Calu3 (cell line): ENCODE measurements at regions of chr19 and their contacts with region 1.

Region 1: DNA sequence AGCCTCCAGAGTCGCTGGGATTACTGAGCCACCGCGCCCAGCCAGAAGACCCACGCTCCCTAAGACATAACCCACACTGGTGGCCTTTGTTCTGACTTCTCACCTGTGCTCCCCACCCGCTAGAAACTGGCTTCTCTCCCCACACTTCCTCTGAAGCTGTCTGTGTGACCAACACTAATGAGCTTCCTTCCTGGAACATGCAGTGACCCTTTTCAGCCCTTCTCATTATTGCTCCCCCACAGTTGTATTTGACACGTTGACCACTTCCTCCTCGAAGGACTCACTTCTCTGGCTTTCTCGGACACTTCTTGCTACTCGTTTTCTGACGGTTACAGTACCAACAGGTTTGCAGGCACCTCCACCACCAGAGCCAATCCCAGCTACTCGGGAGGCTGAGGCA is 10.9 kb downstream of the NCR1 start:
- DNase-seq: no peak
- H3K4me3 Mint-ChIP-seq: no peak overlapping the region
- H3K27ac Mint-ChIP-seq: no peak overlapping the region
- H3K4me1 Mint-ChIP-seq: no peaks in the 10 kb centered on the region
- H3K27me3 Mint-ChIP-seq: peaks cover 71% of the 10 kb centered on the region
- CTCF ChIP-seq: no peak

Region 2: GRCh38 chr19:54653181-54653809 is 263.5 kb before region 1 on chr19:
- CTCF ChIA-PET with region 1: no interaction called
- intact Hi-C with region 1: loop called (anchors 1 kb)
- DNase-seq: no peak
- H3K4me3 Mint-ChIP-seq: no peak overlapping the region
- H3K27ac Mint-ChIP-seq: no peak overlapping the region
- H3K4me1 Mint-ChIP-seq: no peaks in the 10 kb centered on the region
- H3K27me3 Mint-ChIP-seq: peaks cover 64% of the 10 kb centered on the region
- CTCF ChIP-seq: peak; percentile 54

Region 3: DNA sequence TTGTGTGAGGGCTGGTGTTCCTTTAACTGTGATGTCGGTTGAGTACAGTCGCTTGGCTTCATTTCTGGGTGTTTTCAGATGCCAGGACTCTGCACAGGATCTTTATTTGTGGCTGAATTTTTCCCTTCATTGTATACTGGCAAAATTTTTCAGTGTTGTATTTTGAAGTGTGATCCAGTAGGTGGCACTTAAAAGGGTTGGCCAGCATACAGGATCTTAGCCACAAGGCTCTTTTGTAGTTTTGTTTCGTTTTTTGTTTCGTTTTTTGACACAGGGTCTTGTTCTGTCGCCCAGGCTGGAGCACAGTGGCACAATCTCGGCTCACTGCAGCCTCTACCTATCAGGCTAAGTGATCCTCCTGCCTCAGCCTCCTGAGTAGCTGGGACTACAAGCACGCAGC is 34.1 kb before region 1 on chr19:
- CTCF ChIA-PET with region 1: interaction called, 8 read pairs
- intact Hi-C with region 1: loop called (anchors 5 kb)
- DNase-seq: no peak
- H3K4me3 Mint-ChIP-seq: no peak overlapping the region
- H3K27ac Mint-ChIP-seq: no peak overlapping the region
- H3K4me1 Mint-ChIP-seq: no peaks in the 10 kb centered on the region
- H3K27me3 Mint-ChIP-seq: peaks cover 54% of the 10 kb centered on the region
- CTCF ChIP-seq: no peak